Activated naive CD4-positive, alpha-beta T cell treated with anti-CD3 and anti-CD28 coated beads for 36 hours (primary cell): ENCODE measurements at regions of chr20 and their contacts with region 1.

Region 1: DNA sequence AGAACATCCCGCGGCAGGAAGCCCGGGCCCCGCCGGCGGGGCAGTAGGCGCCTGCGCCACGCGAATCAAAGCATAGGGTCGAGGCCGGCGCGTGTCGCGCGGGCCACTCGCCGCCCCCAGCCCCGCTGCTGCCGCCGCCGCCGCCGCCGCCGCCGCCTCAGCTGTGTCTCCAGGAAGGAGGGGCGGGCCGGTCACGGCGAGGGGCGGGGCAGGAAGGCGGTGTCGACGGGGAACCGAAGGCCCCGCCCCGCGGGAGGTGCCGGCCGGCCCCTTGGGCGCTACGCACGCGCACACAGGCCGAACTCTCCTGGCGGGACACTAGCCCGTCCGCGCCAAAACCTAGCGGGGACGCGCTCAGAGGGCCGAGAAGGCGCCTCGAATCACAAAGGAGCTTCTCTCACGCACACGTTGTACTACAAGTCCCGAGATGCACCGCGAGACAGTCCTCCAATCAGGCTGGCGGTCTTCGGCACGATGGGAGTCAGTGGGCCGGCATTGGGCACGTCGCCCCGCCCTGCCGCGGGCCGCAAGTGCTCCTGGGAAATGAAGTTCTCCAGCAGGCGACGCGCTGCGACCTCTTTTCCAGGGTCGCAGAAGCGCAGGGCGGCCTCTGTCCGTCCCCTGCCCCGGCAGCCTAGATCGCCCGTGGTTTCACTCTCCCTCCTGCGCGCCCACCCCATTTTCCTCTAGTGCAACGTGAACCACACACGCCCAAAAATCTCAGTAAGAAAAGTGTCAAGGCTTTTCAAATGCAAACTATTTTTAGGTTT is at the start of gene RALGAPA2:
- DNase-seq: peak; percentile 96
- H3K4me3 Mint-ChIP-seq: peak within 1 kb of the TSS; percentile 87
- H3K27ac Mint-ChIP-seq: peak within 1 kb of the TSS; percentile 86
- H3K4me1 Mint-ChIP-seq: peaks cover 34% of the 10 kb centered on the region
- H3K27me3 Mint-ChIP-seq: no peaks in the 10 kb centered on the region
- total RNA-seq, gene RALGAPA2: 13.6 to 13.7 TPM

Region 2: GRCh38 chr20:20017001-20017843 is 695.4 kb before region 1 on chr20 and contains the start of gene NAA20:
- CTCF ChIA-PET with region 1: no interaction called
- intact Hi-C with region 1: loop called (anchors 10 kb)
- DNase-seq: peak; percentile 93
- H3K4me3 Mint-ChIP-seq: peak within 1 kb of the TSS; percentile 88
- H3K27ac Mint-ChIP-seq: peak within 1 kb of the TSS; percentile 90
- H3K4me1 Mint-ChIP-seq: peaks cover 54% of the 10 kb centered on the region
- H3K27me3 Mint-ChIP-seq: no peaks in the 10 kb centered on the region
- total RNA-seq, gene NAA20: 59.5 to 65.5 TPM

Region 3: GRCh38 chr20:20452254-20452676 is 260.4 kb before region 1 on chr20:
- CTCF ChIA-PET with region 1: no interaction called
- intact Hi-C with region 1: loop called (anchors 2 kb)
- DNase-seq: peak; percentile 83
- H3K4me3 Mint-ChIP-seq: peak overlapping the region; percentile 67
- H3K27ac Mint-ChIP-seq: peak overlapping the region; percentile 56
- H3K4me1 Mint-ChIP-seq: peaks cover 36% of the 10 kb centered on the region
- H3K27me3 Mint-ChIP-seq: no peaks in the 10 kb centered on the region

Region 4: DNA sequence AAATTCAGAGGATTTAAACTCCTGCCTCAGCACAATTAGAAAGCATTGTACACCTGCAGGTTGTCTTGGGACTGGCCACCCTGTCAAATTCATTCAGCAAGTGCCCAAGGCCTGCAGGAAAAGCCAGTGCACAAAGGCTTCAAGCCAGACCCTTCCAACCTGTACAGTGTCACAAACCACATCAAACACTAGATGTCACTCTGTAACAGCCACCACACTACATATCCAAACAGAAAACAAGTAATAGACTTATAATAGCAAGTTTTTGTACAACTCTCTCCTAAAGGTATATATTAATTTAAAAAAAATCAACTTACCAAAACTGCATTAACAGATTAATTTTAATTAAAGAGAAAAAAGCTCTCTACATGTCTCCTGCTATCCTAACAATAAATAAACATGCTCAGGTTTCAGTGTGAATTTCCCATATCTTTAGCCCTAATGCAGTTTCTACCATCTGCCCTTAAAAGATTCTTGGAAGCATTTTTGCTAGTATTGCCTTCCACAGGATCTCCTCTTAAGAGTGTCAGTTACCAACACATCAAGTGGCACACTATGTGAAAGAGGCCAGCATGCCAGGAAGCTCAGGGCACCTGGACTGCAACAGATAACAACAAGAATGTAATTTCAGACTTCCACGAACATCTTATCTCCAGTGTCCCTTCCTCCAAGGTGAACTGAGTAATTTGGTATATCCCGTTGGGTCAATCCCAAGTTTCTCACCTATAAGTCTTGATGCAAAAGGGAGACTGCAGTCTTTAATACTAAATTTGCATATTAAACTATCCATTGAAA is 47.7 kb before region 1 on chr20:
- CTCF ChIA-PET with region 1: no interaction called
- intact Hi-C with region 1: loop called (anchors 2 kb)
- DNase-seq: peak; percentile 22
- H3K4me3 Mint-ChIP-seq: no peak overlapping the region
- H3K27ac Mint-ChIP-seq: no peak overlapping the region
- H3K4me1 Mint-ChIP-seq: peaks cover 24% of the 10 kb centered on the region
- H3K27me3 Mint-ChIP-seq: no peaks in the 10 kb centered on the region

Region 5: GRCh38 chr20:20824924-20825584 is 112.4 kb after region 1 on chr20:
- CTCF ChIA-PET with region 1: interaction called, 3 read pairs
- intact Hi-C with region 1: loop called (anchors 1 kb)
- DNase-seq: peak; percentile 78
- H3K4me3 Mint-ChIP-seq: no peak overlapping the region
- H3K27ac Mint-ChIP-seq: no peak overlapping the region
- H3K4me1 Mint-ChIP-seq: peaks cover 2% of the 10 kb centered on the region
- H3K27me3 Mint-ChIP-seq: peaks cover 23% of the 10 kb centered on the region

Region 6: GRCh38 chr20:21303061-21303871 is 590.6 kb after region 1 on chr20 and contains the start of gene XRN2:
- CTCF ChIA-PET with region 1: no interaction called
- intact Hi-C with region 1: loop called (anchors 1 kb)
- DNase-seq: peak; percentile 96
- H3K4me3 Mint-ChIP-seq: peak within 1 kb of the TSS; percentile 94
- H3K27ac Mint-ChIP-seq: peak within 1 kb of the TSS; percentile 96
- H3K4me1 Mint-ChIP-seq: peaks cover 29% of the 10 kb centered on the region
- H3K27me3 Mint-ChIP-seq: no peaks in the 10 kb centered on the region
- total RNA-seq, gene XRN2: 76.5 to 81.9 TPM